Lower lobe of right lung (tissue), 2 donors: ENCODE measurements at regions of chr11 and their contacts with region 1.

Region 1: DNA sequence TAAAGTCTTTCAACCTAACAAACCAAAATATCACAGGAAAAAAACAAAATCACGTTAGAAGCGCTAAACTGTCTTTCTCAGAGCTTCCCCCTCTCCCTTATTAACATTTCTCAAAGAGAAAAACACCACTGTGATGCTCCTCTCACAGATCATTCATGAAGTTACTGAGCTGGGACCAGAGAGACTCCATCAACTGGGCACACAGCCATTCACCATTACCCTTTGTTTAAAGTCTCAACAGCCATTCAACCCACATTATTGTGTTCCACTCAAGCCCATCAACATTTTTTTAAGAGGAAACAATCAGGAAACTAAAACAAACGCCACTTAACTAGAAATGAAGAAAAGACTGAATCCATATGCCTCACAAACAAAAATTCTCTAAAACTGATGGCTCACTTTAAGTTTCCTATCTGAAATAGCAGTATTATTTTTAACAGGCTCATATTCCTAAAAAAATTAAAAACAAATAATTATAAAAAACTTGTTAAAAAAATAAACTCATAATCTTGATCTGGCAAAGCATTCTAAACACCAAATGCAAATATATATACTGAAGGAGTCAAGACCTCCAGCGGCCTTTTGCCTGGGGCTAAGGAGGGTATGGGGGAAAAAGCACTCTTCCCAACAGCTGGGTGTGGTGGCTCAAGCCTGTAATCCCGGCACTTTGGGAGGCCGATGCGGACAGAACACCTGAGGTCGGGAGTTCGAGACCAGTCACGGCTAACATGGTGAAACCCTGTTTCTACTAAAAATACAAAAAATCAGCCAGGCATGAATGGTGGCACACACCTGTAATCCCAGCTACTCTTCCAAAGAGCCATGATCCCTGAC is 14.0 kb downstream of the CELF1 start:
- DNase-seq: no peak
- ATAC-seq: peak in 1 of 2 donors; percentile 46
- H3K4me3 ChIP-seq: no peak overlapping the region
- H3K27ac ChIP-seq: no peak overlapping the region
- H3K4me1 ChIP-seq: peaks cover 73% of the 10 kb centered on the region
- H3K27me3 ChIP-seq: no peaks in the 10 kb centered on the region
- CTCF ChIP-seq: no peak

Region 2: DNA sequence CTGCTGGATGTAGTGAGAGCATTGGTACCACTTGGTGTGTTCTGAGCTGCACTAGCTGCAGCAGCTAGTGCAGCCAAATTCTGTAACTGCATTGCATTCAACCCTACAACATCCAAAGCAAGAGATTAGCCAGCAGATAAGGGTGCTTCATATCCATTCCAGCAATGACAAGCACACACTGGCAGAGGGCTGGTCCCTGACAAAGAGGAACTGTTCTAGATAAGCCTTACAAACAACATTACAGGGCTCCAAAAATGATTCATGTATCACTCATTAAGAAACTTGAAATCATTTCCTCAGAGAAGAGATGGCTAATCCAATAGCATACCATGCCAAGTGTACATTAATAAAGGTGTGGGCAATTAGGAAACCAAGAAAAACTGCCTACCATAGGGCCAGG is 61.6 kb before region 1 on chr11:
- intact Hi-C with region 1: loop called (anchors 10 kb)
- DNase-seq: no peak
- ATAC-seq: peak; percentile 51 to 53
- H3K4me3 ChIP-seq: no peak overlapping the region
- H3K27ac ChIP-seq: no peak overlapping the region
- H3K4me1 ChIP-seq: peaks cover 4% of the 10 kb centered on the region
- H3K27me3 ChIP-seq: no peaks in the 10 kb centered on the region
- CTCF ChIP-seq: no peak